Adrenal gland (tissue), 19 donors: ENCODE measurements at regions of chr10 and their contacts with region 1.

Region 1: GRCh38 chr10:131786756-131787605 is 113.8 kb upstream of the PPP2R2D start:
- DNase-seq: peak; percentile 25 to 78 (median 54)
- H3K4me3 ChIP-seq: no peak overlapping the region
- H3K27ac ChIP-seq: no peak overlapping the region
- H3K4me1 ChIP-seq: no peaks in the 10 kb centered on the region
- H3K27me3 ChIP-seq: no peaks in the 10 kb centered on the region
- CTCF ChIP-seq: peak; percentile 64 to 84 (median 74)
- POLR2A ChIP-seq: no peak

Region 2: GRCh38 chr10:130190055-130190736 is 1596.8 kb before region 1 on chr10:
- intact Hi-C with region 1: loop called in 1 of 2 experiments (anchors 5 kb)
- DNase-seq: peak; percentile 79 to 92 (median 90)
- H3K4me3 ChIP-seq: peak overlapping the region in 2 of 4 donors; percentile 26 to 70
- H3K27ac ChIP-seq: no peak overlapping the region
- H3K4me1 ChIP-seq: peaks cover 6 to 11% of the 10 kb centered on the region in 2 donors
- H3K27me3 ChIP-seq: no peaks in the 10 kb centered on the region
- CTCF ChIP-seq: peak; percentile 83 to 100 (median 93)
- POLR2A ChIP-seq: no peak

Region 3: GRCh38 chr10:130686689-130687300 is 1100.2 kb before region 1 on chr10:
- intact Hi-C with region 1: loop called in 1 of 2 experiments (anchors 10 kb)
- DNase-seq: peak in 6 of 7 donors; percentile 18 to 66 (median 32)
- H3K4me3 ChIP-seq: no peak overlapping the region
- H3K27ac ChIP-seq: no peak overlapping the region
- H3K4me1 ChIP-seq: no peaks in the 10 kb centered on the region
- H3K27me3 ChIP-seq: no peaks in the 10 kb centered on the region
- CTCF ChIP-seq: peak; percentile 23 to 62 (median 56)
- POLR2A ChIP-seq: no peak

Region 4: DNA sequence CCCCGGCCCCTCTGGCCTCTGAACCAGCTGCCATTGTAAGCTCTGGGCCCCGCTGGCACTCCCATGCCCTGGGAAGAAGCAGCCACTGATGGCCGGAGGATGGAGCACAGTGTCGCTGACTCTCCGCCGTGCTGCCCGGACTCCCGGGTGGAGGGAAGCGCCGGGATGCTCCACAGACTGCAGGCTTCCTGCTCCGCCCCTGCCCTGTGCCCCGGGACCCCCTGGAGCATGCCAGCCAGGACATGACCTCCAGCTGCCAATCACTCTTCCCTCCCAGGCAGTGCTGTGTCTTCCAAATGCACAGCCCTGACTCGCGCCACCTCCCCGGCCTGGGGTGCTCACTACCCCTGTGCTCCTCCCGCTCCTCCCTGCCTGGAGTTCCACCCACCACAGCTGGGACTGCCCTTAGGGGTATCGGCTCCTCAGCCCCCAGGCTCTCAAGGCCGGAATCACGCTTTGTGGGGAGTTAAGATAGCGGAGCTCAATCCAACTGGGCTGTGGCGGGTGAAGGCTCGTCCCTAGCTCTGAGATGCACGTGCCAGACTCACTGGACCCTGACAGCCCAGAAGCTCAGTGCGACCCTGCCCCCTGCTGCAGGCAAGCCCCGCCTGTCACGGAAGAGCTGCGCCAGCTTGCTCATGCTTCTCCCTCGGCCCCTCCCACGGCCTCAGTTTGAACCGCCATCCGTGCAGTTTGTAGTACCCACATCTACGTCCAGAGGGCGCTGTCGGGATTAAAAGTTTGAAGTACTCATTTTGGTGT is 333.2 kb before region 1 on chr10:
- intact Hi-C with region 1: loop called (anchors 5 to 10 kb)
- DNase-seq: peak; percentile 72 to 97 (median 84)
- H3K4me3 ChIP-seq: peak overlapping the region in 1 of 4 donors; percentile 46
- H3K27ac ChIP-seq: peak overlapping the region in 1 of 5 donors; percentile 69
- H3K4me1 ChIP-seq: peaks cover 4 to 10% of the 10 kb centered on the region in 2 donors
- H3K27me3 ChIP-seq: no peaks in the 10 kb centered on the region
- CTCF ChIP-seq: peak; percentile 83 to 96 (median 89)
- POLR2A ChIP-seq: no peak

Region 5: DNA sequence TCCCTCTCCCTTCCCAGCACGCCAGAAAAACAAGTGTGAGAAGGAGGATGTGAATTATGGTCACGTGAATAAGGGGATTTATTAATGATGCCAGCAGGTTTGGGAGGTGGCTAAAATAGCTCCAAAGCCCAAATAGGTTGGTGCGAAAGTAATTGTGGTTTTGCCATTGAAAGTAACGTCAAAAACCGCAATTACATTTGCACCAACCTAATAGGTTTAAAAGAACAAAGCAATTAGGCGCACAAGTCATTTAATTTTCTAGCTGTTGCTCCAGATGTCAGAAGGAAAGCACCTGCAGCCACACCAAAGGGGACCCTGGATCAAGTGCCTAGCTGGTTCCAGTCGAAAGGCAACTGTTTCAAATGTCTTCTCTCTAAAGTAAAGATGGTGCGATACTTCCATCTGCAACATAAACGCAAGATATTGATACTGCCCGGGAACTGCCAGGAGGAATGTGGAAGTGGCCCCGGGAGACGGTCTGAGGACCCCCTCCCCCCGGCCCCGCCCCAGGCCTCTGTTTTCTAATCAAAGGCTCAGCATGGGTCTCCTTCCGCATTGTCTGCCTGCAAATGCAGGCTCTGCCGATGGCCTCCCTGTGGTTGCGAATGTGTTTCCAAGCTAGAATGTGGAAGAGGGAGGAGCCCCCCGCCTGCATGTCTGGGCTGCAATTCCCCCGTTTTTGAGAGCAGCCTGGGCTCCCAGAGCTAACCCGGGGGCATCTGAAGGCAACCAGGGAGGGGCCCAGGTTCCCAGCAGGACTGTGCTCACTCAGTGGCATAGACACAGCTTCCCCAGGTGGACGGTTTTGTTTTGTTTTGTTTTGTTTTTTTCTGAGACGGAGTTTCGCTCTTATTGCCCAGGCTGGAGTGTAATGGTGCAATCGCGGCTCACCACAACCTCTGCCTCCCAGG is 110.2 kb before region 1 on chr10:
- intact Hi-C with region 1: no loop called
- DNase-seq: no peak
- H3K4me3 ChIP-seq: no peak overlapping the region
- H3K27ac ChIP-seq: no peak overlapping the region
- H3K4me1 ChIP-seq: no peaks in the 10 kb centered on the region
- H3K27me3 ChIP-seq: no peaks in the 10 kb centered on the region
- CTCF ChIP-seq: no peak
- POLR2A ChIP-seq: no peak